Mammary epithelial cell (primary cell): ENCODE measurements at regions of chr3 and their contacts with region 1.

Region 1: GRCh38 chr3:98022978-98023820 is 11.9 kb downstream of the GABRR3 start:
- DNase-seq: peak; percentile 46
- H3K4me3 ChIP-seq: no peak overlapping the region
- H3K27ac ChIP-seq: no peak overlapping the region
- H3K4me1 ChIP-seq: no peaks in the 10 kb centered on the region
- H3K27me3 ChIP-seq: no peaks in the 10 kb centered on the region
- CTCF ChIP-seq: peak; percentile 88 to 96

Region 2: GRCh38 chr3:97009427-97010019 is 1013.7 kb before region 1 on chr3:
- CTCF ChIA-PET with region 1: no interaction called
- dilution Hi-C with region 1: no loop called
- in situ Hi-C with region 1: no loop called
- intact Hi-C with region 1: loop called (anchors 10 kb)
- DNase-seq: no peak
- H3K4me3 ChIP-seq: no peak overlapping the region
- H3K27ac ChIP-seq: no peak overlapping the region
- H3K4me1 ChIP-seq: no peaks in the 10 kb centered on the region
- H3K27me3 ChIP-seq: no peaks in the 10 kb centered on the region
- CTCF ChIP-seq: no peak

Region 3: DNA sequence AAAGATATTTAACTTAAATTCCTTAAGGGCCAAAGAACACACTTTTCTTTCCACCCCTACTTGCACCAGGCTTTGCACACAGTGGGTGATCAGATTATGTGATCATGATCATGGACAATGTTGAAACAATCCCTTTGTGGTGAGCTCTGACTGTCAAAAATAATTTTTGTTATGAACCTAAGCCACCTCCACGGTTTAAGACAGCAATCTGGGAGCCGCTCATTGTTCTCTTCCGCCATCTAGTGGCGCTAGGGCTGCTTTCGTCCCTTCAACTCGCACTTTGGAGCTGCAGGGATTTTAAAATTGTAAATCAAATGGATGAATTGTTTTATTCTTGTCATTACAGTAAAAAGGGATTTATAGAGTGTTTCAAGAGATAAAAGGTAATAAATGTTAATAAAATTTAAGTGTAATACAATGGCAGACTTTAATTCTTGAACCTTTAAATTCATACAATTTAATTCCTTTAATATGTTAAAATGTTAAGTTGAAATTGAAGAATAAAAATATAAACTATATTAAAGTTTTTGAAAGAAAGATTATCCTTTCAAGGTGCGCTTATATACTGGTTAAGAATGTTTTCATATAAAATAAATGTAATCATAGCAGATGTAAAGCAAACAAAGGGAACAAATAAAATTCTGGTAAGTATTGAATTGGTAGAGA is 303.9 kb before region 1 on chr3:
- CTCF ChIA-PET with region 1: no interaction called
- dilution Hi-C with region 1: no loop called
- in situ Hi-C with region 1: no loop called
- intact Hi-C with region 1: loop called (anchors 2 kb)
- DNase-seq: peak; percentile 55
- H3K4me3 ChIP-seq: peak overlapping the region in 1 of 3 experiments; percentile 21
- H3K27ac ChIP-seq: no peak overlapping the region
- H3K4me1 ChIP-seq: no peaks in the 10 kb centered on the region
- H3K27me3 ChIP-seq: no peaks in the 10 kb centered on the region
- CTCF ChIP-seq: peak; percentile 96 to 97

Region 4: GRCh38 chr3:97821810-97822775 is 201.1 kb before region 1 on chr3 and contains the start of gene CRYBG3:
- CTCF ChIA-PET with region 1: interaction called, 3 read pairs
- dilution Hi-C with region 1: no loop called
- in situ Hi-C with region 1: no loop called
- intact Hi-C with region 1: loop called (anchors 1 kb)
- DNase-seq: peak; percentile 84
- H3K4me3 ChIP-seq: peak within 1 kb of the TSS; percentile 64 to 85 (median 72)
- H3K27ac ChIP-seq: peak within 1 kb of the TSS; percentile 67
- H3K4me1 ChIP-seq: peaks cover 10% of the 10 kb centered on the region
- H3K27me3 ChIP-seq: no peaks in the 10 kb centered on the region
- CTCF ChIP-seq: peak in 1 of 2 donors; percentile 39
- total RNA-seq, gene CRYBG3: 12.6 to 14.0 TPM

Region 5: GRCh38 chr3:97940034-97940433 is 83.2 kb before region 1 on chr3:
- CTCF ChIA-PET with region 1: no interaction called
- dilution Hi-C with region 1: loop called (anchors 5 kb)
- in situ Hi-C with region 1: no loop called
- intact Hi-C with region 1: loop called (anchors 2 kb)
- DNase-seq: no peak
- H3K4me3 ChIP-seq: no peak overlapping the region
- H3K27ac ChIP-seq: no peak overlapping the region
- H3K4me1 ChIP-seq: no peaks in the 10 kb centered on the region
- H3K27me3 ChIP-seq: no peaks in the 10 kb centered on the region
- CTCF ChIP-seq: no peak

Region 6: DNA sequence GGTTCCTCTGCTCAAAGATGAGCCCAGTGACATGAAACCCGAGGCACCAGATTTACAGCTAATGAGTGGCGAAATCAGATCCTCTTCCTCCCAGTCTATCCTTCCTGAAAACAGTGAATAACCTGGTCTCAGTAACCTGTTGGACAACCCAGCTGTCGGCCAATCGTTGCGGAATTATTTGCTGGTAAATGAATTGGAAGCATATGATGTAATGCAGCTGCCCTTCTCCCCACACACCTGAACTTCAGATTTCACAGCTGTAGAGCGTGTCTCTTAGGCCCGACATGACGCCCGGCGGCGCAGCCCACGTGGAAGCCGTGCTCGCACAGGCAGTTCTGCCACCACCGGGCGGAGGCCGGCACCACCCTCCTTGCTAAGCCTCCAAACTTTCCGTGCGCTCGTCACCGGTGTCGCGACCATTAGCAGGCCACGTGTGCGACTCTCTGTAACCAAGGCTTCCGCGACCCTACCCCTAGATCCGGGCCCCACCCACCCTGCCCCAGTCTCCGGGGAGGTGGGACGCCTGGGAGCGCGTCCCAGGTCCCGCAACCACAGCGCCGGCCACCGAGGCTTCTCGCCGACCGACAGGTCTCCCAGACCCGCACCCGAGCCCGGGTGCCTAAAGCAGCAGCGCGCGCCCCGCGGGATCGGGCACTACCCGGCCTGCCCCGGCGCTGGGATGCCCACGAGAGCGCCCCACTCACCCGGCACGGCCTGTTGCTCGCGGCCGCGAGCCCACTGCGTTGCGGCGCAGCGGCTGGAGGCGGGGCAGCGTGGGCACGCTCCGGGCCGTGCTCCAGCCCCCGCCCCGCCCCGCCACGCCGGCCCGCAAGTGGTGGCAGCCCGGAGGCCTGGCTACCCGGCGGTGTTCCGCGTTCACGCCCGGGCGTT is 51.3 kb before region 1 on chr3 and contains the start of gene RIOX2:
- CTCF ChIA-PET with region 1: no interaction called
- dilution Hi-C with region 1: no loop called
- in situ Hi-C with region 1: no loop called
- intact Hi-C with region 1: no loop called
- DNase-seq: peak; percentile 74
- H3K4me3 ChIP-seq: peak within 1 kb of the TSS; percentile 51 to 71 (median 67)
- H3K27ac ChIP-seq: peak within 1 kb of the TSS; percentile 46
- H3K4me1 ChIP-seq: peaks cover 10% of the 10 kb centered on the region
- H3K27me3 ChIP-seq: no peaks in the 10 kb centered on the region
- CTCF ChIP-seq: no peak
- total RNA-seq, gene RIOX2: 33.3 to 42.4 TPM